Ascending aorta (tissue), 2 donors: ENCODE measurements at regions of chr3 and their contacts with region 1.

Region 1: GRCh38 chr3:172106989-172107388 is 67.6 kb downstream of the FNDC3B start:
- DNase-seq: no peak
- H3K4me3 ChIP-seq: no peak overlapping the region
- H3K27ac ChIP-seq: peak overlapping the region; percentile 8 to 19
- H3K4me1 ChIP-seq: peaks cover 9 to 45% of the 10 kb centered on the region in 2 donors
- H3K27me3 ChIP-seq: no peaks in the 10 kb centered on the region
- CTCF ChIP-seq: no peak

Region 2: DNA sequence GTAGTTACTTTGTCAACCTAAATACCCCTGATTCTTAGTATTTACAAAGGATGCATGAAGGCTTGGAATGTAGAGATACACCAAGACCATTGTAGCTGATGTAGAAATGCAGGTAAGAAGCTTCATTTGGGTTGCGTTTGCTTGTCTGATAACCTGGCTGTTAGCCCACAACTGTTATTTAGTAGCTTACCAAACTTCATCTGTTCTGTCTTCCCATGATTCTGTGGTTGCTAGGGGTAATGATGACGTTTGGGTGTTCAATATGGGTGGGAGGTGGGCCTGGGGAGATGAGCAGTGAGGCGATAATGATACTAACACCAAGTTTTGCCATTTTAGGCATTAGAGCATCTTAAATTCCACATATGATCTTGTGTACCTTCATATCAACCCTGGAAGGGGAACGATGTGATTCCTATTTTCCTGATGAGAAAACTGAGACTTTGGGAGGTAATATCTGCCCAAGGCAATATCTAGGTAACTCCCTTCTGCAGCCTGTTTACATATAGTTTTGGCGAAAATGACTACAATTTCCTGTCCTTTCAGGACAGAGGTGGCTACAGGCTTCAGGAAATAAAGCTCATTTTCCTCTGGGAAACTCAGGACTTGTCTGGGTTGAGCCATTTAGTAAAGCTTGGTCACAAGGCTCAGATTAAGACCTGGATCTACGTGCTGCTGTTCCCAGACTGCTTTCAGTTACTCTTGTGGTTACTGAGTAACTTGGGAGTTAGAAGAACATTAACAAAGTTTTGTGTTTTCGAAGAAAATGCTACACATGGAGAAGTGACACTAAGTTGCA is 40.8 kb before region 1 on chr3:
- intact Hi-C with region 1: loop called (anchors 5 kb)
- DNase-seq: no peak
- H3K4me3 ChIP-seq: no peak overlapping the region
- H3K27ac ChIP-seq: peak overlapping the region in 1 of 2 donors; percentile 20
- H3K4me1 ChIP-seq: peaks cover 16 to 67% of the 10 kb centered on the region in 2 donors
- H3K27me3 ChIP-seq: no peaks in the 10 kb centered on the region
- CTCF ChIP-seq: no peak